Psoas muscle (tissue), 8 donors: ENCODE measurements at regions of chr1 and their contacts with region 1.

Region 1: DNA sequence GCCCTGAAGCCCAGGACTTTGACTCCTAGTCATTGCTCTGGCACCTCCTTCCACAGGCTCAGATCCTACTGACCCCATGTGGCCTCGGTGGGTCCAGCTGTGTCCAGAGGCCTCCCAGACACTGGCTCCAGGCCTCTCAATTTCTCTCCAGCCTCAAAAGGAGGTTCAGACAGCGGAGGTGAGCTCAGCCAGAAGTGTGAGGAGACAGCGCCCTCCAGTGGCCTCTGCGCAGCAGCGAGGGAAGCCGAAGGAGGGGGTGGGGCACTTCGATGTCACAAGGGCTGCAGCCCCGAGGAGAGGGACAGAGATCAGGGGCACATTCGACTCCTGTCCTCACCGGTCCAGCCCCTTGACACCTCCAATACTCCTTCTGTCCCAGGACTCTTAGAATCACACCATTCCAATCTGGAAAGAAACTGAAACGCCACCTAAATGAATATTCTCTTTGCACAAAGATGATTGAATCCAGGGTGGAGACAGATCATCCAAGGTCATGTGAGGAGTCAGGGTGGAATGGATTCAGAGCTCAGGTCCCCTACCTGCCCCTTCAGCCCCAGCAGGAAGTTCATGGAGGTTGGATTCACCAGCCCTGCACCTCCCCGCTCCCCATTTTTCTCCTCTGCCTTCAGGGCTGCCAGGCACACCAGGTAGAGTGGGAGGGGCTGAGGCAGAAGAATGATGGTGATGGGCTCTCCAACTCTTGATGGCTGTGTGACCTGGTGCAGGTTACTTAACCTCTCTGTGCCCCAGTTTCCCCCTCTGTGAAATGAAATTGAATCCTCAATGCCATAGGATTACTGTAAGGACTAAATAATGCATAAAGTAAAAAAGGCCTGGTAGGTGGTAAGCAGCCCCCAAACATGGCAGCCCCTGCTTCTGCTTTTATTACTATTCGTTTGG is 34.8 kb upstream of the ZBTB40 start:
- DNase-seq: peak; percentile 55 to 85
- ATAC-seq: peak; percentile 61 to 75 (median 64)
- H3K4me3 ChIP-seq: no peak overlapping the region
- H3K27ac ChIP-seq: no peak overlapping the region
- H3K4me1 ChIP-seq: peaks cover 26% of the 10 kb centered on the region
- H3K27me3 ChIP-seq: no peaks in the 10 kb centered on the region
- CTCF ChIP-seq: peak; percentile 82

Region 2: GRCh38 chr1:22131875-22132486 is 284.8 kb before region 1 on chr1:
- intact Hi-C with region 1: loop called in 1 of 2 experiments (anchors 10 kb)
- DNase-seq: peak; percentile 35 to 67
- ATAC-seq: peak; percentile 35 to 60 (median 47)
- H3K4me3 ChIP-seq: no peak overlapping the region
- H3K27ac ChIP-seq: peak overlapping the region; percentile 83
- H3K4me1 ChIP-seq: peaks cover 26% of the 10 kb centered on the region
- H3K27me3 ChIP-seq: no peaks in the 10 kb centered on the region
- CTCF ChIP-seq: peak; percentile 69

Region 3: DNA sequence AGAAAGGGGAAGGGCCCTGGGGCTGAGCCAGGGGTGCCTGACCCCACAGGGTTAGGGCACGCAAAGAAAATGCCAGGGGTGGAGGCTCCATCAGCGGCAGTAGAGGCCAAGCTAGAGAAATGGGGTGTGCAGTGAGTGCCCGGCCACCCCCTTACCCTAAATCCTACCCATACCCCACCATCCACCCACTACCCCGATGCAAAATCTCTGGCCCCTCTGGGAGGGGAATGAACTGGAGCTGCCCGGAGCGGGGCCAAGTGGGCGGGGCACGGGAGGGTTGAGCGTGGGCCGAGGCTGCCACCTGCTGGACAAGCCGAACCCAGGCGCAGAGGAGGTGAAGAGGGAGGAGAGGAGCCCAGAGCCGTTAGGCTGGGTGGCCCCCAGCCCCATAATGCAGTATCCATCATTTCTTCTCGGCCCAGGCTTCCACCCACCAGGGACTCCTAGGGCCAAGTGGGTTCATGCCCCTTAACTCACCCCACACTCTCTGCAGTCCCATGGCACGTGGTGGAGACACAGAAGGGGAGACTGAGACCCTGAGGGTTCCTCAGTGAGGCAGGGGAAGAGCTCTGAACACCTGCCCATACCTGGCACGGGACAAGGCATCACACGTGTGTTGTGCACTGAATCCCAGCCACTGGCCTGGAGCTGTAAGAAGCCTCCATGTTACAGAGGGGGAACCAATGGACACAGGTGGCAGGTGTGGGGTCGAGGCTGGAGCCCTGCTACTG is 225.3 kb after region 1 on chr1:
- intact Hi-C with region 1: loop called (anchors 1 kb)
- DNase-seq: peak; percentile 87 to 92
- ATAC-seq: peak; percentile 91 to 96 (median 94)
- H3K4me3 ChIP-seq: no peak overlapping the region
- H3K27ac ChIP-seq: no peak overlapping the region
- H3K4me1 ChIP-seq: no peaks in the 10 kb centered on the region
- H3K27me3 ChIP-seq: peaks cover 0 to 7% (median 0%) of the 10 kb centered on the region in 3 donors
- CTCF ChIP-seq: peak; percentile 93